Head of caudate nucleus (tissue), 42 donors: ENCODE measurements at regions of chr11 and their contacts with region 1.

Region 1: GRCh38 chr11:34105079-34105956 is at the start of gene NAT10:
- DNase-seq: peak; percentile 88 to 98 (median 95)

Region 2: DNA sequence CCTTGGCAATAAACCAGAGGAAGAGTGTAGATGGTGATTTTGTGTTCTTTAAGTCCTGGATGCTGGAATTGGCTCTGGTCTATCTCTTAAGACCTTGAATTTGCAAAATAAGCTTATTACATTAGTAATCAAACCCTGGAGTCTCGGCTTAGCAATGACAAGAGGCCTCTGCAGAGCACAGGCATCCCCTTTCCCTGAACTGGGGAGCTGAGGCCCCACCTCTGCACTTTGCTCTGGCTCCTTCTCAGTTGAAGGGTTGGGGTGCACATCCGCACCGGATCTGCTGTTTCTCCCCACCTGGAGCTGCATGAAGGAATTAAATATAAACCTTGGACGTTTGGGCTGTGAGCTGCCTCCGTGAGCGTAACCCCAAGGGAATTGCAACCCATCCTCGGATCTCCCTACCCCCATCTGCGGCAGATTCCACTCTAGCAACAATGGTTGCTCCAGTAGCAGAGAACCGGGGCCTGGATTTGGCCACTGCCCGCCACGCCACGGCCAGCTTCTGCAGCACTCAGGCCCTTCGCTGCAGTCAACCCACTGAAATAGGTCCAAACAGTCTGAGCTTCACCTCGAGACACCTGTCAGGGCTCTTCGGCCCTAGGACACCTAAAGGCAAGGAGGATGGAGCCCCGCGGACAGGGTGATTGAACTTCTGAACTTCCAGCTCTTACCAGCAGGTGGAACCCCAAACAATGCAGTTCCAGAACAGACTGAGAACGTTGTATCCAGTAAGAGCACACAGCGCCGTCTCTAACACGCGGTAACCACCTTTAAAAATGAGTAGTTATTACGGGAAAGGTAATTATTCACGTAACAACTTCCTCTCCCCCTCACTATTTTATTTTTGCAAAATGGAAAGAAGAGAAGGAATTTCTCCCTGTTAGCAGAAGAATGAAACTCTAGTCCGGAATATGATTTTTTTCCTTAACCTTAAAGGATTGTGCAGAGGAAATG is 108.5 kb before region 1 on chr11:
- intact Hi-C with region 1: loop called (anchors 10 kb)
- DNase-seq: peak; percentile 27 to 92 (median 78)

Region 3: GRCh38 chr11:34051349-34052035 is 53.8 kb before region 1 on chr11 and contains the start of gene CAPRIN1:
- intact Hi-C with region 1: loop called (anchors 1 kb)
- DNase-seq: peak; percentile 71 to 96 (median 90)

Region 4: GRCh38 chr11:34149786-34150185 is 44.5 kb after region 1 on chr11:
- intact Hi-C with region 1: no loop called
- DNase-seq: no peak

Region 5: DNA sequence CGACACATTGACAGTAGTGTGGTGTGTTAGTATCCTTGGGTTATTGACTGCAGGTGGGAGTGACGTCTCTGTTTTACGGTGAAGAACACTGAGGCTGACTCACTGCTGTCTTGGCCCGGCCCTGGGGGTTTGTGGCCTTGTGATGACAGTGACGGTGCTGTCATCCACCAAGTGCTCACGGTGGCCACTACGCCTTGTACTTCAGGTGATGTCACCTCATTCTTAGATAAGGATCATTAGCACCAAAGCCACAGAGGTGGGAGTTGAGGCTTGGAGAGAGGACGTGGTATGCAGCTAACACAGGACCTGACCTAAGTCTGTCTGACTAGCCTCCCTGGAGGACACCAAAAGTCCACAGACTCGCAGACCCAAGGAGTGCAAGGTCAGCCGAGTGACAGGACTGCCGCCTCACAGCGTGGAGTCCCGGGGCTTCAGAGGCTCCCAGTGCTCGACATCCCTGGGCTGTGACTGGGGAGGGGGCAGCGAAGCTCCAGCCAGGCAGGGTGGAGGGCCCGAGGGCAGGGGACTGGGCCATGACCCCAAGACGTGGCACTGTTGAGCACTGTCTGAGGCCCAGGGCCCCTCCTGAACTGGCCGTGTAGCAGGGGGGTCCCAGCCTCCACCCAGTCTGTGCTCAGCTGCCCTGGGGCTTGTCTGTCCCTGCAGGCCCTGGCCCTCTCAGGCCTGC is 56.6 kb after region 1 on chr11:
- intact Hi-C with region 1: loop called (anchors 10 kb)
- DNase-seq: no peak

Region 6: DNA sequence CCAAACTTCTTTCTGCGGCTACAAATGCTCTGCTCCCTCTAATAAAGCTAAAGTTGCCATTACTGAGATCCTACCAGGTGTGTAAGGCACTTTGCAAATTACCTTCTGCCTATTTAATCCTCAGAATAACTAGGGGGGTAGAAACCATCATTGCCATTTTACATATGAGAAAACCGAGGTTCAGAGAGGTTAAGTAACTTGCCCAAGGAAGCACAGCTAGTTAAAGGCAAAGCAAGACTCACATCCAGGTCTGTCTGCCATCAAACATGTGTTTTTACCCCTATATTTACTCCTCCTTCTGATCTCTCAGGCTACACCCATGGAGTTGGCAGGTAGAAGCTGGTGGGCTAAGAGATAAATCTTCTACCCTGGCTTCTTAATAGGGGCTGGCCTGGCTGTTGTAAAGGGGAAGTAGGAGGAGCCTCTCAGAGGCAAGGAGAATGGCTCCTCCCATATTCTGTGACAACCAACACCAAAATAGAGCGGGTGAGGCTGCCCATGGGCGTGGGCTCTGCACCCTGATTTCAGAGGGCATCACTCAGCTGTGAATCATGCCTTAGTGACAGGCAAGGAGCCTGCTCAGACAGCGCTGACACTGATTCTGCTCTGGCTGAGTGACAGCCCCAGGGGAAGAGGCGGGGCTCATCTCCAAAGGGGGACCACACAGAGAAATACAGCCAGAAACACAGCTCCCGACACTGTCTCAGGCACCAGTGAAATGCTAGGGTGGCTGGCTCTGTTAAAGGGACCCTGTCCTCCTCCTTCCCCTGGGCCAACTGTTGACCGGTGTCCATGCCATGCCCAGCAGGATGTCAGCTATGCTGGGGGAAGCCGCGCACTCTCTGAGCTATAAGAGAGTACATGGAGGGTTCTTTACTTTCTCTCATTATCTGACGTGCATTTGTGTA is 145.7 kb after region 1 on chr11:
- intact Hi-C with region 1: no loop called
- DNase-seq: peak; percentile 43 to 95 (median 78)

Region 7: DNA sequence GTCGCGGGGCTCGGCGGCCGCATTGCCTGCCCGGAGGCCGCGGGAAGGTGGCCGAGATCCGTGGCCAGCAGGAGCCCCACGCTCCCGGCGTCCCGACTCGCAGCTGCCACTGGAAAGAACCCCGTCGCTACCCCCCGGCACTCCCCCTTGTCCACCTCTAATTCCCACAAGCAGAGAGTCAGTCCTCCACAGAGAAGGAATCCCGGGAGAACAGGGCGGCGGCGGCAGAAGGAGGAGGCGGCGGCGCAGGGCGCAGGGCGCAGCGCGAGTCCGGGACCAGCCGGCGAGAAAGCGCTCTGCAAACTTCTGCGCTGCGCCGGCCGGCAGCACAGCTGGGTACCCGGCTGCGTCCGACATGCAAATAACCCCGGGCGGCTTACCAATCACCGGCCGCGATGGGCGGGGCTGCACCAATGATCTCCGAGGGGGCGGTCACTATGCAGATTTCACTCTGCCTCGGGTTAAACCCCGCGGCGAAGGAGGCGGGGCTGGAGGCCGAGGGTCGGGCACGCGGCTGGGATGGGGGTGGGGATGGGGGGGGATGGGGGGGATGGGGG is 252.5 kb after region 1 on chr11 and contains the start of gene ABTB2:
- intact Hi-C with region 1: loop called (anchors 5 kb)
- DNase-seq: peak; percentile 96 to 99 (median 99)